Panc1 (cell line): ENCODE measurements at regions of chr6 and their contacts with region 1.

Region 1: DNA sequence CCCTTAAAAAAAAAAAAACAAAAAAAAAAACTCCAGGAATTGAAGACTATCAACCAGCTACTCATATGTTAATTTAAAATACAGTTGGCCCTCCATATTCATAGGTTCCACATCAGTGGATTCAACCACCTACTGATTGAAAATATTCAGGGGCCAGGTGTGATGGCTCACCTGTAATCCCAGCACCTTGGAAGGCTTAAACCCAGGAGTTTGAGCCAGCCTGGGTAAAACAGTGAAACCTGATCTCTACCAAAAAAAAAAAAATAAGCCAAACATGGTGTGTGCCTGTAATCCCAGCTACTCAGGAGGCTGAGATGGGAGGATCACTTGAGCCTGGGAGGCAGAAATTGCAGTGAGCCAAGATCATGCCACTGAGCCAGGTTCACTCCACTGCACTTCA is 72.4 kb upstream of the SMIM8 start:
- DNase-seq: no peak
- ATAC-seq: no peak
- H3K4me3 ChIP-seq: no peak overlapping the region
- H3K27ac ChIP-seq: no peak overlapping the region
- H3K4me1 ChIP-seq: no peaks in the 10 kb centered on the region
- H3K27me3 ChIP-seq: no peaks in the 10 kb centered on the region
- CTCF ChIP-seq: no peak

Region 2: DNA sequence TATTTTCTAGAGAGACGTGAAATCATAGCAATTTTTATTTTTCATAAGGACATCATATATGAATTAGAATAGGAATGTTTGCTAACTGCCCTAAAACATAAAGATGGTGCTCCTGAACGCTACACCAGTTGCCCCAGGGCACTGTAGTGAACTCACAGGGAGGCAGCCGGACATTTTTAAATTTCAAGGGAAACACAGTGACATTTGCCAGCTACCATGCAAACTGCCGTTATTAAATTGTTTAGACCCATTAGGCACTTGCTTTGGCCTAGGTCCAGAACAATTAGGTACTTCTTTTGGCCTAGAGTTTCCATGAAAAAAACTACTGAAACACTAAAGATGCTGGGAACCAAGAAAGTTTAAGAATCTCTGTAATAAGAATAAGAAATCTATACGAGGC is 132.8 kb after region 1 on chr6:
- CTCF ChIA-PET with region 1: no interaction called
- POLR2A ChIA-PET with region 1: no interaction called
- in situ Hi-C with region 1: no loop called
- intact Hi-C with region 1: no loop called
- DNase-seq: no peak
- ATAC-seq: no peak
- H3K4me3 ChIP-seq: no peak overlapping the region
- H3K27ac ChIP-seq: no peak overlapping the region
- H3K4me1 ChIP-seq: no peaks in the 10 kb centered on the region
- H3K27me3 ChIP-seq: no peaks in the 10 kb centered on the region
- CTCF ChIP-seq: no peak

Region 3: DNA sequence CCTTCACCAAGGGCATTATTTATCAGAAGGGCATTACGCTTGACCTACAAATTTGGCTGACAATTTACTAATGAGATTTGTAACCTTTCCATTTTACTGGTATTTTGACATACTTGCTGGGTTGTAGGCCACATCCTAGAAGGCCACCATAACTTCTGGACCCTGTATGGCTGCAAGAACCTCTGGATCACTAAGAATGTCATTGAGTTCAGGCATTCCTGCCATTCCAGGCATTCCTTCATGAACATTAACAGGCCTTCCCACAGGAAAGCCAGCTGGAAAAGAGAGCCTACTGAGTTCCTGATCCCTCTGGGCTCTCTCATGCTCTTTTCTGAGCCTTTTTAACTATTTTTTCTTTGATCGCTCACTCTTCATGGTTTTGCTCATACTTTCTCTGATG is 194.3 kb after region 1 on chr6:
- CTCF ChIA-PET with region 1: no interaction called
- POLR2A ChIA-PET with region 1: interaction called, 10 read pairs
- in situ Hi-C with region 1: no loop called
- intact Hi-C with region 1: no loop called
- DNase-seq: no peak
- ATAC-seq: no peak
- H3K4me3 ChIP-seq: no peak overlapping the region
- H3K27ac ChIP-seq: no peak overlapping the region
- H3K4me1 ChIP-seq: no peaks in the 10 kb centered on the region
- H3K27me3 ChIP-seq: no peaks in the 10 kb centered on the region; the same call in 1 of the 2 replicates
- CTCF ChIP-seq: no peak